ENCODE measurements at regions of chr6 and their contacts with region 1.

Region 1: DNA sequence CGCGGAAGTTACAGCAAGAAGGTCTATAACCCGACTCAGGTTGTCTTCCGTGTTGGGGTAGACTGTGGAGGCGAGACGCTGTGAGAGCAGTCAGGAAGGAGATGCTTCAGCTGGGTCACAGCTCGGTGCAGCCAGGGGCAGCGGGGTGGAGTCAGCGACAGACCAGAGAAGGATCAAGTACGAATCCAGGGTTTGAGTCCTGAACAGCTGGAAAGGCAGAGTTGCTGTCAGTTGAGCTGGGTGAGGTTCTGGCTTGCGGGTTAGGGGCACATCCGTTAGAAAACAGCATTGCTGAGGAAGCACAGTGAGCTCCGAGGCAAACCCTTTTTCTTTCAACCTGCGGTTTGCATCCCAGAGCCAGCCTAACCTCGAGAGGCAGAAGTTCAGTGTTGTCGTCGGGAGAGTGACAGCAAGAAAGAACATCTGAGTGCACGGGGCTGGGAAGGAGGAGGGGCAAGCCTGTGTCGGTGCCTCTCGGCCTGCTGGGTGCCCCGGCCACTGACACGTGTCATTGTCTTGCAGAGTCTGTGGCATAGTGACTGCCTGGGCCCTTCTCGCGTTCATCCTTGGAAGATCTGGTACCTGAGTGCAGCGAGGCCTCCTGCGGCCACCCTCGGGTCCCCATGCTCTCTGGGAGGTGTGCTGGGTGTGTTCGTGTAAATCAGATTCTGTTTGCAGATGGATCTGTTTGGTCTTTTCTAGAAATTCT is 20.0 kb downstream of the PNLDC1 start:
- DNase-seq: peak in 8 of 9 donors; percentile 16 to 74 (median 65)
- ATAC-seq: peak; percentile 82
- H3K4me3 ChIP-seq: peak overlapping the region; percentile 40
- H3K4me3 Mint-ChIP-seq: peak overlapping the region; percentile 81 to 93 (median 86)
- H3K27ac ChIP-seq: peak overlapping the region; percentile 43
- H3K27ac Mint-ChIP-seq: peak overlapping the region; percentile 80 to 97 (median 94)
- H3K4me1 ChIP-seq: peaks cover 0 to 32% of the 10 kb centered on the region in 2 donors
- H3K4me1 Mint-ChIP-seq: peaks cover 15 to 49% (median 30%) of the 10 kb centered on the region in 7 donors
- H3K27me3 ChIP-seq: no peaks in the 10 kb centered on the region
- H3K27me3 Mint-ChIP-seq: no peaks in the 10 kb centered on the region

Region 2: GRCh38 chr6:159311618-159312017 is 508.5 kb before region 1 on chr6:
- CTCF ChIA-PET with region 1: no interaction called
- POLR2A ChIA-PET with region 1: no interaction called
- intact Hi-C with region 1: no loop called
- DNase-seq: no peak
- ATAC-seq: no peak
- H3K4me3 ChIP-seq: no peak overlapping the region
- H3K4me3 Mint-ChIP-seq: no peak overlapping the region
- H3K27ac ChIP-seq: no peak overlapping the region
- H3K27ac Mint-ChIP-seq: peak overlapping the region in 1 of 9 donors; percentile 6
- H3K4me1 ChIP-seq: no peaks in the 10 kb centered on the region
- H3K4me1 Mint-ChIP-seq: peaks cover 0 to 4% (median 0%) of the 10 kb centered on the region in 7 donors
- H3K27me3 ChIP-seq: no peaks in the 10 kb centered on the region
- H3K27me3 Mint-ChIP-seq: peaks cover 0 to 17% (median 4%) of the 10 kb centered on the region in 5 donors

Region 3: DNA sequence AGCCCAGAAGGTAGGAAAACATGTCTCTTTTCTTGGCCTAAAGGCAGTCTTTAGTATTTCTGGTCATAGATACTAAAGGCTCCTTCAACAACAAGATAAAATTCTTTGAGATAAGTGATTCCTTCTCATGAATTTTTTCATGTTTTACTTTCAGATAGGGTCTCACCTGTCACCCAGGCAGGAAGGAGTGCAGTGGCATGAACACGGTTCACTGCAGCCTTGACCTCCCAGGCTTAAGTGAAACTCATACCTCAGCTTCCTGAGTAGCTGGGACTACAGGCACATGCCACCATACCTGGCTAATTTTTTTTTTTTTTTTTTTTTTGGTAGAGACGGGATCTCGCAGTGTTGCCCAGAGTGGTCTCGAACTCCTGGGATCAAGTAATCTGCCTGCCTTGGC is 10.9 kb before region 1 on chr6:
- CTCF ChIA-PET with region 1: no interaction called
- POLR2A ChIA-PET with region 1: interaction called, 10 read pairs
- intact Hi-C with region 1: no loop called
- DNase-seq: no peak
- ATAC-seq: no peak
- H3K4me3 ChIP-seq: no peak overlapping the region
- H3K4me3 Mint-ChIP-seq: no peak overlapping the region
- H3K27ac ChIP-seq: no peak overlapping the region
- H3K27ac Mint-ChIP-seq: no peak overlapping the region
- H3K4me1 ChIP-seq: no peaks in the 10 kb centered on the region
- H3K4me1 Mint-ChIP-seq: peaks cover 0 to 2% (median 0%) of the 10 kb centered on the region in 7 donors
- H3K27me3 ChIP-seq: no peaks in the 10 kb centered on the region
- H3K27me3 Mint-ChIP-seq: no peaks in the 10 kb centered on the region